CD4-positive, alpha-beta T cell (primary cell): ENCODE measurements at regions of chr1 and their contacts with region 1.

Region 1: GRCh38 chr1:113389953-113390834 is at the start of gene MAGI3:
- DNase-seq: peak; percentile 83 to 97 (median 92)
- ATAC-seq: peak; percentile 87
- H3K4me3 ChIP-seq: peak within 1 kb of the TSS; percentile 91
- H3K4me3 Mint-ChIP-seq: peak within 1 kb of the TSS; percentile 92
- H3K27ac ChIP-seq: peak within 1 kb of the TSS; percentile 43 to 46
- H3K27ac Mint-ChIP-seq: peak within 1 kb of the TSS; percentile 67
- H3K4me1 ChIP-seq: peaks cover 25% of the 10 kb centered on the region
- H3K4me1 Mint-ChIP-seq: peaks cover 28% of the 10 kb centered on the region
- H3K27me3 ChIP-seq: no peaks in the 10 kb centered on the region
- H3K27me3 Mint-ChIP-seq: no peaks in the 10 kb centered on the region
- CTCF ChIP-seq: no peak
- total RNA-seq, gene MAGI3: 6.7 to 8.7 TPM

Region 2: DNA sequence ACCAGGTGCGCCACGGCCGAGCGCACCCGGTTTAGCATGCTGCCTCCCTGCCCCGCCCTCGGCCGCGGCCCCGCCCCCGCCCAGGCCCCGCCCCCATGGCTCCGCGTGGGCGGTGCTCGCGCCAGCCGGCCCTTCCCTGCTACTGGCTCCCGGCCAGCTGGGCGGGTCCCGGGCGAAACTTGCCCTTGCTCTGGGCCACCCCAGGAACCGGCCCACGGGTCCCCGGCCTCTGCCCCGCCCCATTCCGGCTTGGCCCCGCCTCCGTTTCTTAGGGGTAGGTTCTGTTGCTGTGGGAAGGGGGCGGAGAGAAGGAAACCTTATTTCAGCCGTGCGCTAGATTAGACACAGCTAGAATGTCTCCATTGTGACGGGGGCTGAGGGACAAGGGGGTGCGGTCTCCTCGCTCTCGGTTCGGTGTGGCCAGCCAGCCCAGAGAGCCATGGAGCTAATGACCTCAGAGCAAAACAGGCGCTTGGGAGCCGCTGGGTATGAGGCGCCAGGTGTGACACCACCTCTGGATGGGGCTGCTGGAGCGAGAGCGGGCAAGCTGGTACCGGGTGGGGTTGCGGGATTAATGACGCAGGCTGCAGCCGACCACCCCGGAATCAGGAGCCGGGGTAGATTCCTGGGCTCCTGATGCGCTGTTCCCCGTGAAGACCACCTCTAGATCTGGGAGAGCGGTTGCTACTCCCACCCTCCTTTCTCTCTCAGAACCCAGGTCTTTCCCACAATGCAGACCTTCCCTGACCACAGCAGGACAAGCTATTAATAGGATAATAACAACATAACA is 674.7 kb before region 1 on chr1 and contains the start of gene PPM1J:
- CTCF ChIA-PET with region 1: no interaction called
- POLR2A ChIA-PET with region 1: interaction called, 5 read pairs
- intact Hi-C with region 1: loop called in 1 of 2 experiments (anchors 5 kb)
- DNase-seq: peak; percentile 91 to 99 (median 96)
- ATAC-seq: peak; percentile 84
- H3K4me3 ChIP-seq: peak within 1 kb of the TSS; percentile 69
- H3K4me3 Mint-ChIP-seq: peak within 1 kb of the TSS; percentile 89
- H3K27ac ChIP-seq: peak within 1 kb of the TSS in 1 of 2 donors; percentile 39
- H3K27ac Mint-ChIP-seq: peak within 1 kb of the TSS; percentile 81
- H3K4me1 ChIP-seq: peaks cover 37% of the 10 kb centered on the region
- H3K4me1 Mint-ChIP-seq: peaks cover 24% of the 10 kb centered on the region
- H3K27me3 ChIP-seq: peaks cover 15 to 22% of the 10 kb centered on the region in 2 experiments
- H3K27me3 Mint-ChIP-seq: peaks cover 35% of the 10 kb centered on the region
- CTCF ChIP-seq: no peak
- total RNA-seq, gene PPM1J: 0.39 to 0.49 TPM

Region 3: GRCh38 chr1:113405573-113405972 is 15.4 kb after region 1 on chr1:
- CTCF ChIA-PET with region 1: no interaction called
- POLR2A ChIA-PET with region 1: interaction called, 3 read pairs
- intact Hi-C with region 1: loop called in 1 of 2 experiments (anchors 2 kb)
- DNase-seq: no peak
- ATAC-seq: no peak
- H3K4me3 ChIP-seq: no peak overlapping the region
- H3K4me3 Mint-ChIP-seq: no peak overlapping the region
- H3K27ac ChIP-seq: no peak overlapping the region
- H3K27ac Mint-ChIP-seq: no peak overlapping the region
- H3K4me1 ChIP-seq: no peaks in the 10 kb centered on the region
- H3K4me1 Mint-ChIP-seq: no peaks in the 10 kb centered on the region
- H3K27me3 ChIP-seq: no peaks in the 10 kb centered on the region
- H3K27me3 Mint-ChIP-seq: no peaks in the 10 kb centered on the region
- CTCF ChIP-seq: no peak

Region 4: GRCh38 chr1:113438505-113439276 is 48.5 kb after region 1 on chr1:
- CTCF ChIA-PET with region 1: no interaction called
- POLR2A ChIA-PET with region 1: no interaction called
- intact Hi-C with region 1: no loop called
- DNase-seq: no peak
- ATAC-seq: no peak
- H3K4me3 ChIP-seq: no peak overlapping the region
- H3K4me3 Mint-ChIP-seq: no peak overlapping the region
- H3K27ac ChIP-seq: no peak overlapping the region
- H3K27ac Mint-ChIP-seq: no peak overlapping the region
- H3K4me1 ChIP-seq: no peaks in the 10 kb centered on the region
- H3K4me1 Mint-ChIP-seq: peaks cover 4% of the 10 kb centered on the region
- H3K27me3 ChIP-seq: no peaks in the 10 kb centered on the region
- H3K27me3 Mint-ChIP-seq: no peaks in the 10 kb centered on the region
- CTCF ChIP-seq: no peak

Region 5: DNA sequence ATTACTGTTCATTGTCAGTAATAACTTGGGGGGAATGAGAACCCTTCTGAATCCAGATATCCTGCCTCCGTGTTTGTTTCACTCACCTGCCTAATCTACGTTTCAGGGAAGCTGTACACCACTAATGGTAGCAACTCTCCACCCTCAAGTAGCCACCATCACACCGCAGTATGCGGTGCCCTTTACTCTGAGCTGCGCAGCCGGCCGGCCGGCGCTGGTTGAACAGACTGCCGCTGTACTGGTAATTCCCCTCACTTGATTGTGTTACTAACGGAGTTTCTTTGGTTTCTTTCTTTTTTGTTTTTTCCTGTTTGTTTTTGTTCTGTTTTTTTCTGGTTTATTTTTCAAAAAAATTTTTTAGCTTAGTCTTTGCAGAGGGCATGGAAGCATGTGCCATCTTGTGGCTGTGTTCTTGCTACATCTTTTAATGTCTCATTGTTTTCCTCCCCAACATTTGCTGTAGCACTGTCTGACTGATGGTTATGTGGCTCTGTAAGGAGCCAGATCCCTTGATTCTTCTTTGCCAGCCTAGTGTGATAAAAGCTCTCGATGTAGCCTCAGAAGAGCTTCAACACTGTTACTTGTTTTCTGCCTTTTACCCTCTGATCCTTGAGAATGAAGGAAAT is 573.2 kb after region 1 on chr1:
- CTCF ChIA-PET with region 1: no interaction called
- POLR2A ChIA-PET with region 1: no interaction called
- intact Hi-C with region 1: loop called in 1 of 2 experiments (anchors 10 kb)
- DNase-seq: peak in 2 of 14 experiments; percentile 36 to 39
- ATAC-seq: peak; percentile 56
- H3K4me3 ChIP-seq: no peak overlapping the region
- H3K4me3 Mint-ChIP-seq: no peak overlapping the region
- H3K27ac ChIP-seq: no peak overlapping the region
- H3K27ac Mint-ChIP-seq: peak overlapping the region; percentile 65
- H3K4me1 ChIP-seq: no peaks in the 10 kb centered on the region
- H3K4me1 Mint-ChIP-seq: peaks cover 26% of the 10 kb centered on the region
- H3K27me3 ChIP-seq: no peaks in the 10 kb centered on the region
- H3K27me3 Mint-ChIP-seq: no peaks in the 10 kb centered on the region
- CTCF ChIP-seq: no peak

Region 6: DNA sequence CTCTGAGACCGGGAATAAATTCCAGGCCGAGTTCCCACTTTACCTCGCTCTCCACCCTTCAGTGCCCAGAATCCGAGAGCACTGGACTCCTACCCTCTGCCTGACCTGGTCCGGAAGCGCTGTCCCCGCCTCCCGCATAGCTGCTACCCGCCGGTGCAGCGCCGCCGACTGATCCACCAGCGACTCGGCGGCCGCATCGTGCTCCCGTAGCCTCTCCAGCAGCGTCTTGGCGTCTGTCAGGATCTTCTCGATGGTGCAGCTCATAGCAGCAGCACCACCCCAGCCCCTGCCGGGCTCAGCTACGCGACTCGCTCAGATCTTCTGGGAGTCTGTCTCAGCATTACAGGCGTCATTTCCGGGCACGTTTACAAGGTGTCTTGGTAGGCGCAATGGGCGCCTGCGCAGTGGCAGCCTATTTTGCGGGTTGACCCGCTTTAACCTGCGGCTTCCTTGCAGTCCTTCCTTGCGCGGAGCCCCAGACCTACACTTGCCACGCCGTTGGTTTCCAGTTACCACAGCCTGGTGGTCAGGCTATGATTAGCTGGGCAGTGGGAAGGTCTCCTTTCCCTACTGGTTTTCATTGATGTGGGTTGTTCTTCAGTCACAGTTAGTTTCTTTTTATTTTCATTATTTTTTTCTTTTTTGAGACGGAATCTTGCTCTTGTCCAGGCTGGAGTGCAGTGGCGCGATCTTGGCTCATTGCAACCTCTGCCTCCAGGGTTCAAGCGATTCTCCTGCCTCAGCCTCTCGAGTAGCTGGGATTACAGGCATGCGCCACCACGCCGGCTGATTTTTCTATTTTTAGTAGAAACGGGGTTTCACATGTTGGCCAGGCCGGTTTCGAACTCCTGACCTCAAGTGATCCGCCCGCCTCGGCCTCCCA is 1390.4 kb after region 1 on chr1 and contains the start of gene SIKE1:
- CTCF ChIA-PET with region 1: no interaction called
- POLR2A ChIA-PET with region 1: no interaction called
- intact Hi-C with region 1: loop called in 1 of 2 experiments (anchors 5 kb)
- DNase-seq: peak; percentile 87 to 98 (median 92)
- ATAC-seq: peak; percentile 98
- H3K4me3 ChIP-seq: peak within 1 kb of the TSS; percentile 84
- H3K4me3 Mint-ChIP-seq: peak within 1 kb of the TSS; percentile 100
- H3K27ac ChIP-seq: peak within 1 kb of the TSS; percentile 88 to 90
- H3K27ac Mint-ChIP-seq: peak within 1 kb of the TSS; percentile 96
- H3K4me1 ChIP-seq: peaks cover 11% of the 10 kb centered on the region
- H3K4me1 Mint-ChIP-seq: peaks cover 36% of the 10 kb centered on the region
- H3K27me3 ChIP-seq: no peaks in the 10 kb centered on the region
- H3K27me3 Mint-ChIP-seq: no peaks in the 10 kb centered on the region
- CTCF ChIP-seq: no peak
- total RNA-seq, gene SIKE1: 69.8 to 75.3 TPM